ENCODE measurements at regions of chr21 and their contacts with region 1.

Region 1: GRCh38 chr21:42002421-42002958 is 7.7 kb downstream of the ZBTB21 start:
- DNase-seq: peak; percentile 89
- H3K4me3 Mint-ChIP-seq: peak overlapping the region; percentile 27
- H3K27ac Mint-ChIP-seq: peak overlapping the region; percentile 86
- H3K4me1 Mint-ChIP-seq: peaks cover 62% of the 10 kb centered on the region
- H3K27me3 Mint-ChIP-seq: no peaks in the 10 kb centered on the region

Region 2: GRCh38 chr21:41879190-41879998 is 123.1 kb before region 1 on chr21 and contains the start of gene PRDM15:
- CTCF ChIA-PET with region 1: no interaction called
- intact Hi-C with region 1: loop called (anchors 2 kb)
- DNase-seq: peak; percentile 86
- H3K4me3 Mint-ChIP-seq: peak within 1 kb of the TSS; percentile 84
- H3K27ac Mint-ChIP-seq: peak within 1 kb of the TSS; percentile 91
- H3K4me1 Mint-ChIP-seq: peaks cover 15% of the 10 kb centered on the region
- H3K27me3 Mint-ChIP-seq: no peaks in the 10 kb centered on the region
- total RNA-seq, gene PRDM15: 9.6 to 9.8 TPM

Region 3: GRCh38 chr21:41901099-41901498 is 101.4 kb before region 1 on chr21:
- CTCF ChIA-PET with region 1: no interaction called
- intact Hi-C with region 1: loop called (anchors 1 kb)
- DNase-seq: peak; percentile 78
- H3K4me3 Mint-ChIP-seq: no peak overlapping the region
- H3K27ac Mint-ChIP-seq: peak overlapping the region; percentile 75
- H3K4me1 Mint-ChIP-seq: peaks cover 26% of the 10 kb centered on the region
- H3K27me3 Mint-ChIP-seq: no peaks in the 10 kb centered on the region

Region 4: DNA sequence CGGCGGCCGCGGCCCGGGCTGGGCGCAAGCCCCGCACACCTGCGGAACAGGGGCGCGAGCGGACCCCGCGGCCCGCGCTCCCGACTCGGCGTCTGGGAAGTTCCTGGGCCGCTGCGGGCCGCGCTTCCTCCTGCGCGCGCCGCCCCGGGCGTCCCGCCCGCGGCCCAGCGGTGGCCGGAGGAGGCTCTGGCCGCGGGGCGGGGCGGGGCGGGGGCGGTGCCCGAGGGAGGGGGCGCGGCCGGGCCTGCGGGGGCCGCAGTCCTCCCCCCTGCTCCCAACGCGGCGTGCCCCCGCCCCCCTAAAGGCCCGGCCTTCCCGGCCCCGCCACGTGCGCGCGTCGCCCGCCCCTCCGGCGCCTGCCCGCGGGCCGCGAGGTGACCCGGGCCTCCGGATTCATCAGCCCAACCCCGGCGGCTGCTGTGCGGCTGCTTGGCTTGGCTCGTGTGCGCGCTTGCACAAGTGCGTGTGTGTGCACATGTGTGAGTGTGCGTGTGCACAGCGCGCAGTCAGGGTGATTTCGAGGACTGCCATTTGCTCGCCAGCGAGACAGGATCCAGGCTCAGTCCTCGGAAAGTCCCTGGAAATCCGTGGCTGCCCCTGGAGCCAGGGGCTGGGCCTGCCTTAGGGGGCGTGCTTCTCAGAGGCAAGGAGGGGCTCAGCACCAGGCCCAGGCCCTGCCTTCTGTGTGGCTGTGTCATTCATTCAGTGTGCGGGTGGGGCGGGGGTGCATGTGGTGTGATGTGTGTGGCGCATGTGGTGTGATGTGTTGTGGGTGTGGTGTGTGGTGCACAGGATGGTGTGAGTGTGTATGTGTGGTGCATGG is 48.4 kb before region 1 on chr21 and contains the start of gene C2CD2:
- CTCF ChIA-PET with region 1: no interaction called
- intact Hi-C with region 1: no loop called
- DNase-seq: peak; percentile 19
- H3K4me3 Mint-ChIP-seq: peak within 1 kb of the TSS; percentile 54
- H3K27ac Mint-ChIP-seq: no peak within 1 kb of the TSS
- H3K4me1 Mint-ChIP-seq: peaks cover 13% of the 10 kb centered on the region
- H3K27me3 Mint-ChIP-seq: peaks cover 4% of the 10 kb centered on the region
- total RNA-seq, gene C2CD2: 6.9 to 7.3 TPM

Region 5: GRCh38 chr21:42561762-42562650 is 559.5 kb after region 1 on chr21:
- CTCF ChIA-PET with region 1: no interaction called
- intact Hi-C with region 1: no loop called
- DNase-seq: no peak
- H3K4me3 Mint-ChIP-seq: no peak overlapping the region
- H3K27ac Mint-ChIP-seq: peak overlapping the region; percentile 20
- H3K4me1 Mint-ChIP-seq: no peaks in the 10 kb centered on the region
- H3K27me3 Mint-ChIP-seq: no peaks in the 10 kb centered on the region

Measured in activated naive CD4-positive, alpha-beta T cell treated with anti-CD3 and anti-CD28 coated beads for 36 hours (primary cell).